SK-N-SH (cell line): ENCODE measurements at regions of chr5 and their contacts with region 1.

Region 1: DNA sequence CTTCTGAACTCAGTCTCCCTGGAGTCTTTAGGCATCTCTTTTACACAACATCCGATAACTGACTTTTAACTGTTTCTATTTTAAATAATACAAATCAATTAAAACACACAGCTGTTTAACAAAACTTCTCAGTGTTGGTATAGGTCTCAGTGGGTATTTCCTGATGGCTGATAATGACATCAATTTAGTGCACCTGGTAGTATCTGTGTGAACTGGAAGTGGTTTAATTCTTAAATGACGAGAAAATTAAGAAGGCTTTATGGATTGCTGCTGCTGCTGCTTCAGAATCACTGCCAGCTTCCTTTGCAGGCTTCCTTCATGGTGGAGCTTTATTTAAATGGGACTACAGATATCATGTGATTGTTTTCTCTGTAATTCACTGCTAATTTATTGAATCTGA is 92.3 kb downstream of the RPS23 start:
- DNase-seq: no peak
- H3K4me3 ChIP-seq: no peak overlapping the region
- H3K27ac ChIP-seq: no peak overlapping the region
- H3K4me1 ChIP-seq: no peaks in the 10 kb centered on the region; a peak in 2 of 4 replicates
- H3K27me3 ChIP-seq: no peaks in the 10 kb centered on the region
- CTCF ChIP-seq: no peak
- EP300 ChIP-seq: no peak
- RAD21 ChIP-seq: no peak

Region 2: GRCh38 chr5:81817980-81818379 is 367.9 kb before region 1 on chr5:
- CTCF ChIA-PET with region 1: no interaction called
- POLR2A ChIA-PET with region 1: no interaction called
- DNase-seq: no peak
- H3K4me3 ChIP-seq: no peak overlapping the region
- H3K27ac ChIP-seq: no peak overlapping the region
- H3K4me1 ChIP-seq: peaks cover 0 to 9% of the 10 kb centered on the region in 2 experiments; a peak in 2 of 4 replicates
- H3K27me3 ChIP-seq: no peaks in the 10 kb centered on the region
- CTCF ChIP-seq: no peak
- EP300 ChIP-seq: no peak
- RAD21 ChIP-seq: no peak

Region 3: GRCh38 chr5:81980160-81980559 is 205.7 kb before region 1 on chr5:
- CTCF ChIA-PET with region 1: no interaction called
- POLR2A ChIA-PET with region 1: interaction called, 10 read pairs
- DNase-seq: no peak
- H3K4me3 ChIP-seq: no peak overlapping the region
- H3K27ac ChIP-seq: peak overlapping the region in 1 of 2 experiments; percentile 36; a peak in 1 of 4 replicates
- H3K4me1 ChIP-seq: peaks cover 0 to 10% of the 10 kb centered on the region in 2 experiments; a peak in 2 of 4 replicates
- H3K27me3 ChIP-seq: no peaks in the 10 kb centered on the region
- CTCF ChIP-seq: no peak
- EP300 ChIP-seq: no peak
- RAD21 ChIP-seq: no peak

Region 4: DNA sequence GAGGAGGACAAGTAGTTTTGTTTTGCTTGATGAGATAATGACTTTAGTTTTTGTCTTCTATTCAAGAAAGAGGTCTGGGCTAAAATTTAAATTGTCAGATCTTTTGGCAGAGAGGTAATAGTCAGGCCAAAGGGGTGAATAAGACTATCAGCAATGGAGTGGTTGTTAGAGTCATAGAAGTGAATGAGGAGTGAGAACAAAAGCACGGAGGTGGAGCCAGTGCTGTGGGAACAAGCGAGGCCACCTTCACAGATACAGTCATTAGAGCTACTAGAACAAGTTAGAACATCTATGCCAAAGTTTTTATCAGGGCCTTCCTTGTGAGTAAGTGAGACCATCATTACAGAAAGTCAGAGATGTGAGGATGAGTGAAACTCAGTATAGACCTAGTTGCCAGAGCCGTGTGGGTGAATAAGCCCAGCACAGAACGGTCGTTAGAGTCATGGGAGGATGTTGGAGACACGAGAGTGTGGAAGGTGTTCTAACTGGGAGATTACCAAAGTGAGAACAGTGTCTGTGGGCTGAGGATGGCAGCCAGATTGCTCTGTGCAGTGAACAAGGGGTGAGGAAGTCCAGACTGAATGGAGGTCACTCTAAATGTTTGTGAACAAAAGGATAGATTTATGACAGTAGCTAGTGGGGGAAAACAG is 42.8 kb before region 1 on chr5:
- CTCF ChIA-PET with region 1: no interaction called
- POLR2A ChIA-PET with region 1: no interaction called
- DNase-seq: no peak
- H3K4me3 ChIP-seq: no peak overlapping the region
- H3K27ac ChIP-seq: no peak overlapping the region
- H3K4me1 ChIP-seq: no peaks in the 10 kb centered on the region
- H3K27me3 ChIP-seq: no peaks in the 10 kb centered on the region
- CTCF ChIP-seq: no peak
- EP300 ChIP-seq: no peak
- RAD21 ChIP-seq: no peak

Region 5: GRCh38 chr5:82641331-82642003 is 455.6 kb after region 1 on chr5:
- CTCF ChIA-PET with region 1: no interaction called
- POLR2A ChIA-PET with region 1: no interaction called
- DNase-seq: peak; percentile 64
- H3K4me3 ChIP-seq: no peak overlapping the region
- H3K27ac ChIP-seq: peak overlapping the region in 1 of 2 experiments; percentile 86; a peak in 3 of 4 replicates
- H3K4me1 ChIP-seq: peaks cover 0 to 15% of the 10 kb centered on the region in 2 experiments; a peak in 2 of 4 replicates
- H3K27me3 ChIP-seq: no peaks in the 10 kb centered on the region
- CTCF ChIP-seq: peak; percentile 78
- EP300 ChIP-seq: peak in 1 of 2 experiments; percentile 46; a peak in 1 of 4 replicates
- RAD21 ChIP-seq: peak; percentile 97